ENCODE measurements at regions of chr19 and their contacts with region 1.

Region 1: GRCh38 chr19:49148784-49149651 is 6.2 kb downstream of the HRC start:
- DNase-seq: peak; percentile 100
- ATAC-seq: peak; percentile 57
- H3K4me3 Mint-ChIP-seq: peak overlapping the region; percentile 92
- H3K27ac Mint-ChIP-seq: peak overlapping the region; percentile 91
- H3K4me1 Mint-ChIP-seq: peaks cover 33% of the 10 kb centered on the region
- H3K27me3 Mint-ChIP-seq: peaks cover 42% of the 10 kb centered on the region
- CTCF ChIP-seq: no peak

Region 2: DNA sequence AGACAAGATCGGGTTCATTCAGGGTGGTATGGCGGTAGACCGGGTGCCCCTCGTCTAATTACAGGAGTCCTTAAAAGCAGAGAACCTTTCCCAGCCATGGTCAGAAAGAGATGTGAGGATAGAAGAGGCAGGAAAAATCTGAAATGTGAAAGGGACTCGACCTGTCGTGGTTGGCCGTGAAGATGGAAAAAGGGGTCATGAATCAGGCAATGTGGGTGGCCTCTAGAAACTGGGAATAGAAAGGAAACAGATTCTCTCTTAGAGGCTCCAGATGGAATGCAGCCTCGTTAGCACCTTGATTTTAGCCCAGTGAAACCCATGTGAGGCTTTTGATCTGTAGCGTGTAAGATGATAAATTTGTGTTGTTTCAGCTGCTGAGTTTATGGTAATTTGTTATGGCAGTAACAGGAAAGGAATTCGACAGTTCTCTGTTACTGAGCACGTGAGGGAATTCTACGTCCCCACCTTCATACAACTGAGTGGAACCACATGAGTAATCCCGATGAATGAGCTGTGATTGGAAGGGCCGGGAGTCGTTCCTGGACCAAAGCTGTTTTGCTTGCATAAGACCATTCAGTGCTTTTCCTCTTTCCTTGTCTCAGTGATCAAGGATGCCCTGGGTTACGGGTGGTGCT is 492.1 kb before region 1 on chr19:
- CTCF ChIA-PET with region 1: no interaction called
- POLR2A ChIA-PET with region 1: no interaction called
- DNase-seq: no peak
- ATAC-seq: no peak
- H3K4me3 Mint-ChIP-seq: no peak overlapping the region
- H3K27ac Mint-ChIP-seq: no peak overlapping the region
- H3K4me1 Mint-ChIP-seq: peaks cover 19% of the 10 kb centered on the region
- H3K27me3 Mint-ChIP-seq: peaks cover 19% of the 10 kb centered on the region
- CTCF ChIP-seq: no peak

Region 3: DNA sequence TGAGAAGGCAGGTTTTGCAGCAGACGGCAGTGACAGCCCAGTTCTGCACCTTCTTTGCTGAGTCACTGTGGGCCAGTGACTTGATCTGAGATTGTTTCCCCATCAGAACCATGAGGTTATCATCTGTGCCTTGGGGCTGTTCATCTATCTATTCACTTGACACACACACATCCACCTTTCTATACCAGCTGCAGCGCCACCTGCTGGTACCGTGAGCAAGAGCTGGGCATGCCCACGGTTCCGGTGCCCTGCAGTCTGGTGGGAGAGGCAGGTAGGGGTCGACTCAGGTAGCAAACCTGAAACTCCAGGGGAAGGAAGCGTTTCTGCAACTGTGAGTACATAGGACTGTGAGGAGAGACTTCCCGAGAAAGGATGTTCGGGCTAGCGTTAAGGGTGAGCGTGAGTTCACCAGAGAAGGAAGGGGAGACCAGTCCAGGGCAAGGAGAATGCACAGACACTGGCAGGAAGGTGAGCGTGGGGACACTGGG is 42.3 kb before region 1 on chr19:
- CTCF ChIA-PET with region 1: interaction called, 17 read pairs
- POLR2A ChIA-PET with region 1: no interaction called
- DNase-seq: peak; percentile 83
- ATAC-seq: peak; percentile 80
- H3K4me3 Mint-ChIP-seq: peak overlapping the region; percentile 7; the same call in 1 of the 2 replicates
- H3K27ac Mint-ChIP-seq: peak overlapping the region; percentile 95
- H3K4me1 Mint-ChIP-seq: peaks cover 13% of the 10 kb centered on the region
- H3K27me3 Mint-ChIP-seq: no peaks in the 10 kb centered on the region
- CTCF ChIP-seq: peak; percentile 78

Region 4: GRCh38 chr19:49118565-49119410 is 30.2 kb before region 1 on chr19 and contains the start of gene C19orf73:
- CTCF ChIA-PET with region 1: interaction called, 52 read pairs
- POLR2A ChIA-PET with region 1: interaction called, 4 read pairs
- DNase-seq: peak; percentile 94
- ATAC-seq: peak; percentile 81
- H3K4me3 Mint-ChIP-seq: peak within 1 kb of the TSS; percentile 75
- H3K27ac Mint-ChIP-seq: peak within 1 kb of the TSS; percentile 61
- H3K4me1 Mint-ChIP-seq: peaks cover 14% of the 10 kb centered on the region
- H3K27me3 Mint-ChIP-seq: peaks cover 64% of the 10 kb centered on the region
- CTCF ChIP-seq: no peak
- total RNA-seq, gene C19orf73: 3.1 to 3.4 TPM (median 3.2 TPM) in 3 replicates

Region 5: GRCh38 chr19:49127674-49128544 is 21.1 kb before region 1 on chr19:
- CTCF ChIA-PET with region 1: interaction called, 118 read pairs
- POLR2A ChIA-PET with region 1: interaction called, 7 read pairs
- DNase-seq: peak; percentile 98
- ATAC-seq: peak; percentile 90
- H3K4me3 Mint-ChIP-seq: peak overlapping the region; percentile 89
- H3K27ac Mint-ChIP-seq: peak overlapping the region; percentile 97
- H3K4me1 Mint-ChIP-seq: peaks cover 25% of the 10 kb centered on the region
- H3K27me3 Mint-ChIP-seq: peaks cover 66% of the 10 kb centered on the region
- CTCF ChIP-seq: no peak

Region 6: DNA sequence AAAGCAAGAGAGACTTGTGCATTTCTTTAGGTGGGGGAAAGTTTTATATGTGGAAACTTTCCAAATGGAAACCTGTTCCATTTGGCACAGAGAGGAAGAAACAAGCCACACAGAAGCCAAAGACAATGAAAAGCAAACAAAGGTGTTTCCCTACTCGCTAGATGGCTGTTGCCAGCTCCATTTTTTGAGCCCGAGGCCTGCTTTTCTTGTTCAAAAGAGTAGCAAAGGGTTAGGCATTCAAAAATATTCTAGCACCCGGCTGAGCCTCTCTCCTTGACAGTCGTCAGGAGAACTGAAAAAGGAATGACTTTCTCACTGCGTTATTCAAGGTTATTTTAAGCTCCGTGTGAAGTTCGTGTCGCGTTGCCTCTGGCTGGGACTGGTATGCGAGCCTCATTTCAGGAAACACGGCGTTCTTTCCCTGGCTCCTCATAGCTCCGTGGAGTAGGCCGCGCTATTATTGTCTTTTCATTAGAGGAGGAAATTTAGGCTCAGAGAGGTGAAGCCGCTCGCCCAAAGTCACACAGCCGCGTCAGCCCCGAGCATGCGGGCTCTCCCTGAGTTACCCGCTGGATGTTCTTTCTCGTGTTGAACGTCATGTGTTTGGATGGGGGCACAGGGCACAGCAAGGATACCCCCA is 16.2 kb after region 1 on chr19:
- CTCF ChIA-PET with region 1: interaction called, 24 read pairs
- POLR2A ChIA-PET with region 1: interaction called, 6 read pairs
- DNase-seq: no peak
- ATAC-seq: no peak
- H3K4me3 Mint-ChIP-seq: peak overlapping the region; percentile 29
- H3K27ac Mint-ChIP-seq: peak overlapping the region; percentile 49; the same call in 1 of the 2 replicates
- H3K4me1 Mint-ChIP-seq: peaks cover 6% of the 10 kb centered on the region
- H3K27me3 Mint-ChIP-seq: peaks cover 8% of the 10 kb centered on the region
- CTCF ChIP-seq: no peak

Region 7: GRCh38 chr19:49512970-49513745 is 364.1 kb after region 1 on chr19:
- CTCF ChIA-PET with region 1: no interaction called
- POLR2A ChIA-PET with region 1: no interaction called
- DNase-seq: peak; percentile 65
- ATAC-seq: peak; percentile 74
- H3K4me3 Mint-ChIP-seq: peak overlapping the region; percentile 79
- H3K27ac Mint-ChIP-seq: 0 out of 2 replicates have a peak overlapping the region, but pooled peaks have one; percentile 74
- H3K4me1 Mint-ChIP-seq: peaks cover 28% of the 10 kb centered on the region
- H3K27me3 Mint-ChIP-seq: no peaks in the 10 kb centered on the region
- CTCF ChIP-seq: no peak